Adrenal gland (tissue), 19 donors: ENCODE measurements at regions of chr11 and their contacts with region 1.

Region 1: GRCh38 chr11:125923012-125923579 is 18.8 kb downstream of the DDX25 start:
- DNase-seq: peak; percentile 57 to 82 (median 63)
- H3K4me3 ChIP-seq: no peak overlapping the region
- H3K27ac ChIP-seq: no peak overlapping the region
- H3K4me1 ChIP-seq: peaks cover 0 to 3% of the 10 kb centered on the region in 2 donors
- H3K27me3 ChIP-seq: no peaks in the 10 kb centered on the region
- CTCF ChIP-seq: peak; percentile 50 to 82 (median 70)
- POLR2A ChIP-seq: no peak

Region 2: GRCh38 chr11:126059238-126059781 is 136.2 kb after region 1 on chr11:
- intact Hi-C with region 1: loop called in 1 of 2 experiments (anchors 5 kb)
- DNase-seq: no peak
- H3K4me3 ChIP-seq: no peak overlapping the region
- H3K27ac ChIP-seq: no peak overlapping the region
- H3K4me1 ChIP-seq: peaks cover 7 to 8% of the 10 kb centered on the region in 2 donors
- H3K27me3 ChIP-seq: no peaks in the 10 kb centered on the region
- CTCF ChIP-seq: no peak
- POLR2A ChIP-seq: no peak

Region 3: DNA sequence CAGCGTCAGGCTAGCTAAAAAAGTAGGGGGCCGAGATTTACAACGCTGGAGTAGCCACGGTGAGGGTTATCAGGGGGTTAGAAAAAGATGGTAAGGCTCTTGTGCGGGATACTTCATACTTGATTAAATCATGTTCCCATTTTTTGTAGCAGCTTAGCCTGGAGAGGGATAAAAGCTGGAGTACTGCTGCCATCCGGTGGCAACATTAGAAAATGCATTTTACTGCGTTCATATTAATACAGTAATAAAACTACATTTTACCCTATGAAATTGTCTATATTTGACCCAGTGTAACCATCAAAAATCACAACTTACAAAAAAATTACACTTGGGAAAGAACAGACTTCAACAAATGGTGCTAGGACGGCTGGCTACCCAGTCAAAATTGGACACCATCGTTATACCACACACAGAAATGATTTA is 271.0 kb after region 1 on chr11:
- intact Hi-C with region 1: loop called (anchors 2 to 5 kb)
- DNase-seq: peak in 6 of 7 donors; percentile 29 to 79 (median 48)
- H3K4me3 ChIP-seq: no peak overlapping the region
- H3K27ac ChIP-seq: no peak overlapping the region
- H3K4me1 ChIP-seq: no peaks in the 10 kb centered on the region
- H3K27me3 ChIP-seq: no peaks in the 10 kb centered on the region
- CTCF ChIP-seq: peak; percentile 59 to 90 (median 76)
- POLR2A ChIP-seq: no peak